AG04449 (cell line): ENCODE measurements at regions of chr2 and their contacts with region 1.

Region 1: DNA sequence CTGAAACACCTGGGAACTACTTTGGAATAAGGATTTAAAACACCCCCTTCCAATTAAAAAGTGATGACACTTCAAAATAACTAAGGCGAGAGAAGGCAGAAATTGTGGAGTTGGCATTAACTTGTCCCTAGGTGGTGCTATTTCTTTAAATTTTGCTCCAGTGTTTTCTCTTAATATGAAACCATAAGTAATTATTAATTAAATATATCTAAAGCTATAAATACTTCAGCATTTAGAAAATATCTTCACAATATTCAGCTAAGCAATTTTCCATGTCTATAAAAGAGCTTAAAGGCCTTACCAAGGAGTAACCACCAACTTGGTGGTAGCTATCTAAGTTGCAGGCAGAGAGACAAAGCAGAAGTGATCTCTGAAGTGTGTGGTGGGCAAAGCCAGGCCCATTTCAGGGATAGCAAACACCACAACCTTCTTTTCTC is 186.8 kb upstream of the PGAP1 start:
- DNase-seq: no peak
- H3K4me3 ChIP-seq: no peak overlapping the region
- CTCF ChIP-seq: no peak

Region 2: DNA sequence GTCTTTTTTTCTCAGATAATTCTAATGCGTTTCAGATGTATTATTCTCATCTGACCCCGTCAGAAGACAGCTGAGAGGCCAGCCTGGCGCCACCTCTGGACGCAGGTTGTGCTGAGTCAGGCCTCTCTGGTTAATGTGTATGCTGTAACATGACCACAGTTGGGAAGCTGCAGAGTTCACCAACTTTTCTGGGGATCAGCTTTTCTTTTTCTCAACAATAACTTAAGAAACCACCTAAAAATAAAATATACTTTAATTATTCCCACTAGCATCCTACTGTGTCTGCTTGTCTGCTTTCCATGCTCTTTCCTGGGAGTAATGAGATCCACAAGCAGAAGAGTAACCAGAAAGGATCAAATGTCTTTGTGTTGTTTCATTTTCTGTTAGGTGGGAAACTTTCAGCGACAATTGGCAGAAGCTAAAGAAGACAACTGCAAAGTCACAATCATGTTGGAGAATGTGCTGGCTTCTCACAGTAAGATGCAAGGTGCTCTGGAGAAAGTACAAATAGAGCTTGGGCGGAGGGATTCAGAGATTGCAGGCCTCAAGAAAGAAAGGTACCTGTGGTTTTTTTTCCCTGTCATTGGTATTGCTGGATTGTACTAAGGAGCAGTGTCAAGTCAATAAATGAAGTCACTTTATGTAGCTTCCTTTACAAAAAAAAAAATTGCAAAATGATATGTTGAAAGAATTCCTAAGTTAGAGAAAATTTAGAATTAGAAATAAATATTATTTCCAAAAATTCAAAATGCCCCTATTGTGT is 394.0 kb before region 1 on chr2:
- CTCF ChIA-PET with region 1: no interaction called
- POLR2A ChIA-PET with region 1: no interaction called
- DNase-seq: no peak
- H3K4me3 ChIP-seq: no peak overlapping the region
- CTCF ChIP-seq: peak; percentile 33

Region 3: GRCh38 chr2:197090713-197091367 is 22.5 kb before region 1 on chr2:
- CTCF ChIA-PET with region 1: interaction called, 15 read pairs
- POLR2A ChIA-PET with region 1: no interaction called
- DNase-seq: no peak
- H3K4me3 ChIP-seq: no peak overlapping the region
- CTCF ChIP-seq: no peak

Region 4: GRCh38 chr2:197131558-197131855 is 18.2 kb after region 1 on chr2:
- CTCF ChIA-PET with region 1: interaction called, 54 read pairs
- POLR2A ChIA-PET with region 1: no interaction called
- DNase-seq: no peak
- H3K4me3 ChIP-seq: no peak overlapping the region
- CTCF ChIP-seq: no peak

Region 5: DNA sequence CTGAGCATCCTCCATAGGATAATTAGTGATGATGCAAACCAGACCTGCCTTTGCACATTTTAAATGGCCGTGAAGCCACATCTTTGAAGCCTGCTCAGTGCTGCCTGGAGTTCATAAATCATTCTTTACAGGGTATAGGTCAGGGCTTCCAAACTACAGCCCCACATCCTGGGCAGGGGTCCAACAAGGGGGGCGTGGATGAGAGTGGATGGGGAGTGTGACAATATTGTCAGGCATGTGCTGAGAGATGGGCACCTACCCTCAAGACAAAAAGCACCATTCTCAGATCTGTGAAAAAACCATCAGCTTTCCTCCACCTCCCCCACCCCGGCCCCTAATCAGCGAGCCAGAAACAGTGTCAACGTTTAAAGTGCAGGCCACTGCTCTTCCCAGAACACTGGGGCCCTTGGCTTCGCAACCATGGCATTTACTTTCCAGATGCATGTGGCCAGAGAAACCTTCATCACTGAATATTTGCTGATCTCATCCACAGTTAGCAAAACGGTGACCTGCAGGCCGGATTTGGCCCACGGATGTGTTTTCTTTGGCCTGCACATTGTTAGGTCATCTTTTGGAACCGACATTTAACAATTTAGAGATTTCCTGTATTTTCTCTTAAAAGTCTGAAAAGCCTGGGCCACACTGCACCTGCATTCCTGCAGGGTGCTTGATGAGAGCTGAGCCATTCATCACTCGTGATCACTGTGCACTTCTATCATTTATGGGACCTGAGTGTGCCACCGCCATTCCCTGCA is 66.6 kb after region 1 on chr2:
- CTCF ChIA-PET with region 1: interaction called, 17 read pairs
- POLR2A ChIA-PET with region 1: no interaction called
- DNase-seq: no peak
- H3K4me3 ChIP-seq: no peak overlapping the region
- CTCF ChIP-seq: no peak

Region 6: GRCh38 chr2:197310271-197310985 is 197.1 kb after region 1 on chr2 and contains the start of gene ANKRD44:
- CTCF ChIA-PET with region 1: interaction called, 19 read pairs
- POLR2A ChIA-PET with region 1: no interaction called
- DNase-seq: no peak
- H3K4me3 ChIP-seq: peak within 1 kb of the TSS; percentile 77
- CTCF ChIP-seq: no peak

Region 7: DNA sequence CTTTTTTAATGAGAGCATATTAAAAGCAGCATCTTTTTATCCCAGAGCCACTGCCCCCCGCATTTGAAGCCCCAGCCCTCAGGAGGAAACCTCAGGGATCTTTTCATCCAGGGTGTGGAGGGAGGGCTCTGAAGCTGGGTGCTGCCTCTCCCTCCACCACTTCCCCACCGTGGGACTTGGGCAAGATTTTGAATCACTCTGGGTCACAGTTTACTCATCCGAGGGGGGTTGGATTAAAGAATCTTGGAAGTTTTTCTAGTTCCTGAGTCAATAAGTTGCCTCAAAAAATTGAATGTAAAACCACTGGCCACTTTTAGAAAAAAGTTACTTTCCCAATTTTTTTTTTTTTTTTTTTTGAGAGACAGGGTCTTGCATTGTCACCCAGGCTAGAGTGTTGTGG is 259.3 kb after region 1 on chr2:
- CTCF ChIA-PET with region 1: interaction called, 51 read pairs
- POLR2A ChIA-PET with region 1: no interaction called
- DNase-seq: no peak
- H3K4me3 ChIP-seq: no peak overlapping the region
- CTCF ChIP-seq: no peak

Region 8: GRCh38 chr2:197647961-197648690 is 534.8 kb after region 1 on chr2:
- CTCF ChIA-PET with region 1: no interaction called
- POLR2A ChIA-PET with region 1: no interaction called
- DNase-seq: no peak
- H3K4me3 ChIP-seq: no peak overlapping the region
- CTCF ChIP-seq: no peak